WTC11 (cell line): ENCODE measurements at regions of chr7 and their contacts with region 1.

Region 1: DNA sequence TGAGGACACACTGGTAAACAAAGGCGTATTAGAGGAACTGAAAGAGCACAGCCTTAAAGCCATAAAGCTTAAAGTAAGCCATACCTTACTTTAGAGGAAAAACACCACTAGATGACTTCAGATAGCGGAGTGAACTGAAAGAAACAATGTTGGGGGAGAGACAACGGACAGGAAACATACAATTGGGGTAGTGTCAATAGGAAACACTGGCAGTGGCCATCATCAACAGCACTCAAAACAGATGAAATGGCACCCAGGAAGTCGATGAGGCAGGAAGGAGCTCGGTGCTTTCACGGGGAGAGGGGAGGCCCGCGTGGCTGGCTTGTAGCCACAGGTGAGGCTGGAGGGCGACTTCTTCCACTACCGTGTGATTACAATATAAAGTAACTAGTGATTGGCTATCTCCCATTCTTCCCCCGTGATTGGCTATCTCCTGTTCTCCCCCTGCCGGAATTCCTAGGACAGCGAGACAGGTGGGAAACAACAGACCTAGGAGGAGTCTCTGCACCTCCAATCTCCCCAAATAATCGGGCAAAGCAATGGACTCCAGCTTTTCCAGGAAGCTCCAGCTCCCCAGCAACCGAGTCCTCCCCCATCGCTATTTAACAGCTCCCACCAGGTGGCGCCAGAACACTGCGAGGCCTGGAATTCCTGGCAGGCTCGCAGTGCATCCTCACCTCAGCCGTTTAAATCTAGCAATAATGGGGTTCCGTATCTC is 2.4 kb upstream of the TAS2R38 start:
- DNase-seq: peak; percentile 95
- ATAC-seq: peak; percentile 97
- H3K4me3 Mint-ChIP-seq: peak overlapping the region; percentile 64
- H3K27ac Mint-ChIP-seq: peak overlapping the region; percentile 24
- H3K4me1 Mint-ChIP-seq: peaks cover 11% of the 10 kb centered on the region; the same call in 1 of the 2 replicates
- H3K27me3 Mint-ChIP-seq: no peaks in the 10 kb centered on the region
- CTCF ChIP-seq: peak; percentile 86

Region 2: GRCh38 chr7:141842904-141843303 is 133.1 kb before region 1 on chr7:
- CTCF ChIA-PET with region 1: no interaction called
- POLR2A ChIA-PET with region 1: no interaction called
- DNase-seq: no peak
- ATAC-seq: no peak
- H3K4me3 Mint-ChIP-seq: no peak overlapping the region
- H3K27ac Mint-ChIP-seq: no peak overlapping the region
- H3K4me1 Mint-ChIP-seq: no peaks in the 10 kb centered on the region
- H3K27me3 Mint-ChIP-seq: no peaks in the 10 kb centered on the region
- CTCF ChIP-seq: no peak

Region 3: DNA sequence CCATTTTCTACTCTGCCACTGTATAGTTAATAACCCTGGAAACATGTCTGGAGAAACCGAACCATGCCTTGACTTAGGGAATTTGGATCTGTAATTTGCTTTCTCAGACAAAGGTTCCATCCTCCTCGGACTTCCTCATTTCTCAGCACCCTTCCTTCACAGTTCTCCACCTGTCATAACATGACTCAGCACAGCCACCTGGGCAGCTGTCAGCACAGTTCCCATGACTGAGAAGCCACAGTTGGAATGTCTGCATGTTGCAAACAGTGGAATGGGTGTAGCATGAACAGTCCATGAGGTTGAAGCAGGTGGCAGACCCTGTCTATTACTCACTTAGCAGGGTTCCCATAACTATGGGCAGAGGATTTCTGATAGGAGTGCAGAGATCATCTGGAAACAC is 60.4 kb before region 1 on chr7:
- CTCF ChIA-PET with region 1: no interaction called
- POLR2A ChIA-PET with region 1: no interaction called
- DNase-seq: no peak
- ATAC-seq: no peak
- H3K4me3 Mint-ChIP-seq: no peak overlapping the region
- H3K27ac Mint-ChIP-seq: no peak overlapping the region
- H3K4me1 Mint-ChIP-seq: no peaks in the 10 kb centered on the region
- H3K27me3 Mint-ChIP-seq: peaks cover 3% of the 10 kb centered on the region
- CTCF ChIP-seq: no peak

Region 4: GRCh38 chr7:141960687-141961422 is 15.1 kb before region 1 on chr7:
- CTCF ChIA-PET with region 1: interaction called, 18 read pairs
- POLR2A ChIA-PET with region 1: no interaction called
- DNase-seq: no peak
- ATAC-seq: no peak
- H3K4me3 Mint-ChIP-seq: no peak overlapping the region
- H3K27ac Mint-ChIP-seq: no peak overlapping the region
- H3K4me1 Mint-ChIP-seq: no peaks in the 10 kb centered on the region
- H3K27me3 Mint-ChIP-seq: no peaks in the 10 kb centered on the region
- CTCF ChIP-seq: no peak

Region 5: GRCh38 chr7:142030294-142030693 is 54.3 kb after region 1 on chr7:
- CTCF ChIA-PET with region 1: interaction called, 31 read pairs
- POLR2A ChIA-PET with region 1: no interaction called
- DNase-seq: no peak
- ATAC-seq: peak; percentile 72
- H3K4me3 Mint-ChIP-seq: no peak overlapping the region
- H3K27ac Mint-ChIP-seq: no peak overlapping the region
- H3K4me1 Mint-ChIP-seq: no peaks in the 10 kb centered on the region
- H3K27me3 Mint-ChIP-seq: no peaks in the 10 kb centered on the region
- CTCF ChIP-seq: no peak

Region 6: GRCh38 chr7:142053988-142054387 is 78.0 kb after region 1 on chr7:
- CTCF ChIA-PET with region 1: no interaction called
- POLR2A ChIA-PET with region 1: no interaction called
- DNase-seq: no peak
- ATAC-seq: no peak
- H3K4me3 Mint-ChIP-seq: no peak overlapping the region
- H3K27ac Mint-ChIP-seq: no peak overlapping the region
- H3K4me1 Mint-ChIP-seq: no peaks in the 10 kb centered on the region
- H3K27me3 Mint-ChIP-seq: no peaks in the 10 kb centered on the region
- CTCF ChIP-seq: no peak

Region 7: DNA sequence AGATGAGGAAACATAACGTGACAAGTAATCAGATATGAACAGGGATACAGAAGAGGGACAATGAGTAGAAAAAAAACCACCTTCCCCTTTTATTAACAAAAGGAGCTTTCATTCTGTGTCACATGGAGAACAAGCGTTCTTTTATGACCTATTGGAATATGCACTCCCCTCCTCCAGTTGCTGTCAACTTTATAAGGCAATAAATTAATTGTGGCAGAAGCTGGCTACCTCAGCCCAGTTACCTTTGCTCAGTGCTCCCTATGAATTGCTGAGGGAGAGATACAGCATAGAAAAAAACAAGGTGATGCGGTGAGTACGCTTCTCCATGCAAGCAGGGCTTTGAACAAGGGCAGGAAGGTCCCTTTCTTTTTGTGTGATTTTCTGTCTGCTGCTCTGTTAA is 135.5 kb after region 1 on chr7 and contains the start of gene MGAM2:
- CTCF ChIA-PET with region 1: interaction called, 11 read pairs
- POLR2A ChIA-PET with region 1: interaction called, 5 read pairs
- DNase-seq: no peak
- ATAC-seq: no peak
- H3K4me3 Mint-ChIP-seq: no peak within 1 kb of the TSS
- H3K27ac Mint-ChIP-seq: peak within 1 kb of the TSS; percentile 91; the same call in 1 of the 2 replicates
- H3K4me1 Mint-ChIP-seq: peaks cover 19% of the 10 kb centered on the region
- H3K27me3 Mint-ChIP-seq: no peaks in the 10 kb centered on the region
- CTCF ChIP-seq: no peak
- total RNA-seq, gene MGAM2: 0.09 TPM in 1 of 3 replicates, not detected in the others

Region 8: GRCh38 chr7:142185801-142186200 is 209.8 kb after region 1 on chr7:
- CTCF ChIA-PET with region 1: interaction called, 22 read pairs
- POLR2A ChIA-PET with region 1: no interaction called
- DNase-seq: no peak
- ATAC-seq: no peak
- H3K4me3 Mint-ChIP-seq: no peak overlapping the region
- H3K27ac Mint-ChIP-seq: no peak overlapping the region
- H3K4me1 Mint-ChIP-seq: peaks cover 4% of the 10 kb centered on the region; the same call in 1 of the 2 replicates
- H3K27me3 Mint-ChIP-seq: no peaks in the 10 kb centered on the region
- CTCF ChIP-seq: no peak

Region 9: GRCh38 chr7:142301923-142302550 is 326.1 kb after region 1 on chr7:
- CTCF ChIA-PET with region 1: interaction called, 30 read pairs
- POLR2A ChIA-PET with region 1: no interaction called
- DNase-seq: no peak
- ATAC-seq: no peak
- H3K4me3 Mint-ChIP-seq: no peak overlapping the region
- H3K27ac Mint-ChIP-seq: no peak overlapping the region
- H3K4me1 Mint-ChIP-seq: peaks cover 29% of the 10 kb centered on the region
- H3K27me3 Mint-ChIP-seq: peaks cover 22% of the 10 kb centered on the region
- CTCF ChIP-seq: no peak